ENCODE measurements at regions of chr19 and their contacts with region 1.

Region 1: GRCh38 chr19:39212375-39212742 is 8.3 kb upstream of the SYCN start:
- H3K4me3 Mint-ChIP-seq: no peak overlapping the region
- H3K27ac Mint-ChIP-seq: no peak overlapping the region
- H3K4me1 Mint-ChIP-seq: no peaks in the 10 kb centered on the region
- H3K27me3 Mint-ChIP-seq: peaks cover 9% of the 10 kb centered on the region

Region 2: GRCh38 chr19:39328046-39328705 is 115.8 kb after region 1 on chr19:
- intact Hi-C with region 1: loop called (anchors 1 kb)
- H3K4me3 Mint-ChIP-seq: no peak overlapping the region
- H3K27ac Mint-ChIP-seq: peak overlapping the region; percentile 52
- H3K4me1 Mint-ChIP-seq: peaks cover 59% of the 10 kb centered on the region
- H3K27me3 Mint-ChIP-seq: no peaks in the 10 kb centered on the region